Ovary (tissue), 10 donors: ENCODE measurements at regions of chr22 and their contacts with region 1.

Region 1: GRCh38 chr22:24887260-24887659 is 59.2 kb downstream of the LHFPL7 start:
- DNase-seq: no peak
- H3K4me3 ChIP-seq: no peak overlapping the region
- H3K27ac ChIP-seq: no peak overlapping the region
- H3K4me1 ChIP-seq: no peaks in the 10 kb centered on the region
- H3K27me3 ChIP-seq: no peaks in the 10 kb centered on the region
- CTCF ChIP-seq: no peak
- EP300 ChIP-seq: no peak
- POLR2A ChIP-seq: no peak

Region 2: DNA sequence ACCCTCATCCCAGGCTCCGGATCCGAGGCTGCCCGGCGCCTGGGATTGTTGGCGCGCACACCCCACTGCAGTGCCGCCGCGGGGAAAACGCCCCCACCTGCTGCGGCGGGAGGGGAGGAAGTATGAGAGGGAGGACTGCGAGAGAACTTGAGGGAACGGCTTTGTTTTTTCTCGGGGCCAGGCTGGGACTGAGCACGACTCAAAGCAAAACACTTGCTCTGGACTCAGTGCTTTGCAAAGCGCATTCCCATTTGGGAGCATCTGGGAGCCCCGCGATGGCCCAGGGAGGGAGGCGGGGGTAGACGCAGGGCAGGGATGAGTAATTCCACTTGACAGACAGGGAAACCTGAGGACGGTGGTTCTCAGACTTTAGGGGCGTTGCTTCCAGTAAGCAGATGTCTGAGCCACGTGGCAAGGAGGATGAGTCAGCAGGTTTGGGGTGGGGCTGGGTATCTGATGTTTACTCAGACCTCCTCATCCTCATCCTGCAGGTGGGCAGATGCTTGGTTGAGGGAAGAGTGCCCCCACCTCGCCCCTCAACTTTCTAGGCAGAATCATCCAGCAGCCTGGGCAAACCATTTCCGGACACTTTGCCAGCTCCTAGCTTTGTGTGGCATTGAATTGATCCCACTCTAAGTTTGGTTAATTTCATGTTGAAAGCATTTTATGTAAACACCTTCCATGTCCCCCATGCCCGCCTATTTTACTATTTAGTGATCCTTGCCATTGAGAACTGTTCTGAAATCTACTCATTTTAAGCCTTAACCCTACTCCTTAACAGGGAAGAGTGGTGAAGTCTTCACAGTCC is 1771.6 kb after region 1 on chr22:
- intact Hi-C with region 1: loop called in 1 of 4 experiments (anchors 5 kb)
- DNase-seq: peak in 1 of 5 donors; percentile 46
- H3K4me3 ChIP-seq: peak overlapping the region; percentile 20
- H3K27ac ChIP-seq: no peak overlapping the region
- H3K4me1 ChIP-seq: no peaks in the 10 kb centered on the region
- H3K27me3 ChIP-seq: no peaks in the 10 kb centered on the region
- CTCF ChIP-seq: no peak
- EP300 ChIP-seq: no peak
- POLR2A ChIP-seq: no peak